ENCODE measurements at regions of chr5 and their contacts with region 1.

Region 1: DNA sequence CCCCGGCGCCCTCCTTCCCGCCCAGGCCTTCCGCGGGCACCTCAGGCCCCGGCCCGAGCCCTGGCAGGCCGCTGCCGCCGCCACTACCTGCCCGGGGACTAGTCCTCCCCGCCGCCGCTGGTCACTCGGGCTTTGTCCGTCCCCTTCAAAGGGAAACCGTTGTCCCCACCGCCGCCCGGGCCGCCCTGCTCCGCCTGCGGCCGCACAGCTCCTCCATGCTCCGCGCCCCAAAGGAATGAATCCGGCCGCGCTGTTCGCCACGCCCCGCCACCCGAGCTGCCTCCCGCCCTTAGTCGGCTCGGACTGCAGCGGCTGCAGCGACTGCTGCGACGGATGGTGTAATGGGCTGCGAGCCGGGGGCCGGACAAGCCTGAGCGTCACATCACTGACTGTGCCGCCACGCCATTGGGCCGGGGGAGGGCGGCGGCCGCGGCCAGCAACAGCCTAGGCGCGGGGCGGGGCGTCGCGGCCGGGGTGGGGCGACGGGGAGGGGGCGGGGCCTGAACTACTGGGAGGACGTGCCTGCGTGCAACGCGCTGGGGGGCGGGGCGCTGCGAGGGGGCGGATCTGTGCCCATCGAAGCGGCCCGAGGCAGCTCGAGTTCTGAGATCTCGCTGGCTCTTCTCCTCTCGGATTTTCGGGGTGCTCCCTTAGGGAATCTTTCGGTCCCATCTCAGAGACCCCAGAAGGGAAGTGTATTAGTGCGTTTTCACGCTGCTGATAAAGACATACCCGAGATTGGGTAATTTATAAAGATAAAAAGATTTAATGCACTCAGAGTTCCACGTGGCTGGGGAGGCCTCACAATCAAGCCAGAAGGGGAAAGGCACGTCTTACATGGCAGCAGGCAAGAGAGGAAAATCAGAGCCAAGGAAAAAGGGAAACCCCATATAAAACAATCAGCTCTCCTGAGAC is at the start of gene FEM1C:
- DNase-seq: peak; percentile 97
- H3K4me3 ChIP-seq: peak within 1 kb of the TSS; percentile 81 to 94 (median 86)
- H3K27ac ChIP-seq: peak within 1 kb of the TSS; percentile 86
- H3K4me1 ChIP-seq: no peaks in the 10 kb centered on the region
- H3K27me3 ChIP-seq: no peaks in the 10 kb centered on the region
- CTCF ChIP-seq: no peak
- total RNA-seq, gene FEM1C: 15.1 to 15.2 TPM

Region 2: DNA sequence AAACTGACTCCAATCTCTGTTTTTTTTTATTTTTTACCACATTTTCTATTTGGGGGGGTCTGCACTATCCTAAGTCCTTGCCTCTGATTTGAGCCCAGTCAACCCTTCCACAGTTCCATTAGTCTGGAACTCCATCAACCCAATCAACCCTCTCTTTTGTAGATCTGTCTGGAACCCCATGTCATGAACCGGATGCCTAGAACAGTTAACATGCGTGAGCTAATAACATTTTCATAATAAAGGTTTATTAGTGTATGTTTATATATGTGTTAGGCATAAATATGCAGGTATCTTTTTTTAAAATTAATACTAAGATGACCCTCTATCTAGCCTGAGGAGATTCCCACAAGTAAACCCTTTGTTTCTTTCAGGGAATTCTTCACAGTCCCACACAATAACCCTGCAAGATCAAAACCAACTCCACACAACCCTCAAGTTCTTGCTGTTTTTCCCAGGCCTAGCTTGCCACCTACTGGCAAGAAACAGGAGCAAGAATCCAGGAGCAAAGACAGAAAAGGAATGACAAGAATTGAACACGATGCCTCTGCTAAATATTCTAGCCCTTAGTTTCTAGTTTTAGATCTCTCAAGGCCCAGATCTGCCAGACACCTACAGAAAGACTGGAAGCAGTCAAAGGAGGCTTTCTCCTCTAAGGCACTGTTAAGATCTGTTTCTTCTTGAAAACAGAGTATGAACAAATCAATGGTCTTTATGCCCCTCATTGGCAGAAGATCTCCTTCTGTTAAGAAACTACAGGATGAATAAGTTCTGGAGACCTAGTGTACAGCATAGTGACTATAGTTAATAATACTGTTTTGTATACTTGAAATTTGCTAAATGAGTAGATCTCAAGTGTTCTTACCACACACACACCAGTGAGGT is 475.4 kb before region 1 on chr5:
- CTCF ChIA-PET with region 1: no interaction called
- dilution Hi-C with region 1: no loop called
- in situ Hi-C with region 1: no loop called
- intact Hi-C with region 1: no loop called
- DNase-seq: peak; percentile 45
- H3K4me3 ChIP-seq: no peak overlapping the region
- H3K27ac ChIP-seq: no peak overlapping the region
- H3K4me1 ChIP-seq: no peaks in the 10 kb centered on the region
- H3K27me3 ChIP-seq: no peaks in the 10 kb centered on the region
- CTCF ChIP-seq: peak; percentile 73 to 86

Region 3: DNA sequence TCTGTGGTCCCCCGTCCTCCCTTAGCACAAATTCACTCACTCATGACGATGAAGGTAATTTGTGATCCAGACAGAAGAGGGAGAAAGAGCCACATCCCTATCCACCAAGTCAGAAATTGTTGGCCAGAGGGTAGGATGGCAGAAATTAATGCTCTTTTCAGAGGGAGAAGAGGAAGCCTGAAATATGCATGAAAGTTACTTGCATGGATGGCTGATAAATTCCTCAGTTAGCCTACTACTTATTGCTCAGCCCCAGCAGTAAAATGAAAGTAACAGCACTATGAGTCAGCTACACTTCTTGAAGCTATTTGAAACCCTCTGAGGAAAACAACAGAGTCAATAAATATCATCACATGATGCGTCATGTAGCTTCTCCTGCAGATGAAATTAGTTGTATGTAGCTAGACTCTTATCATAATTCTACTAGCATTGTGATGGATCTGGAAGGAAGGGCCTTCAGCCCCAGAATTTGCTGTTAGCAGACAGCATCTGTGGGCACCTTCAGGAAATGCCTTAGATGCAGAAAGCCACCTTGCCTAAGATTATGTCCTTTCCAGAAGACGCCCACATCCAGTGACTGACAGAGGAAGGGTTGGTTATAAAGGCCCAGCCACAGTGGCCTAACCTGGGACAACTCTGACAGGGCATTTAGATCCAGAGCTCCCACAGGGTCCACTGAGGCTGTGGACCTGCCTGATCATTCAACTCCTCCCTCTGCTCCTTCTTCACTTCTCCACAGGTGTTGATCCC is 167.1 kb before region 1 on chr5:
- CTCF ChIA-PET with region 1: no interaction called
- dilution Hi-C with region 1: no loop called
- in situ Hi-C with region 1: no loop called
- intact Hi-C with region 1: loop called (anchors 1 kb)
- DNase-seq: peak; percentile 66
- H3K4me3 ChIP-seq: no peak overlapping the region
- H3K27ac ChIP-seq: no peak overlapping the region
- H3K4me1 ChIP-seq: peaks cover 21% of the 10 kb centered on the region
- H3K27me3 ChIP-seq: no peaks in the 10 kb centered on the region
- CTCF ChIP-seq: peak in 1 of 2 donors; percentile 29

Region 4: GRCh38 chr5:115415143-115415491 is 129.6 kb before region 1 on chr5:
- CTCF ChIA-PET with region 1: no interaction called
- dilution Hi-C with region 1: no loop called
- in situ Hi-C with region 1: no loop called
- intact Hi-C with region 1: loop called (anchors 5 kb)
- DNase-seq: peak; percentile 90
- H3K4me3 ChIP-seq: no peak overlapping the region
- H3K27ac ChIP-seq: peak overlapping the region; percentile 21
- H3K4me1 ChIP-seq: peaks cover 28% of the 10 kb centered on the region
- H3K27me3 ChIP-seq: no peaks in the 10 kb centered on the region
- CTCF ChIP-seq: no peak

Region 5: GRCh38 chr5:115460472-115460871 is 84.2 kb before region 1 on chr5:
- CTCF ChIA-PET with region 1: no interaction called
- dilution Hi-C with region 1: no loop called
- in situ Hi-C with region 1: no loop called
- intact Hi-C with region 1: loop called (anchors 2 kb)
- DNase-seq: peak; percentile 90
- H3K4me3 ChIP-seq: no peak overlapping the region
- H3K27ac ChIP-seq: peak overlapping the region; percentile 92
- H3K4me1 ChIP-seq: peaks cover 40% of the 10 kb centered on the region
- H3K27me3 ChIP-seq: no peaks in the 10 kb centered on the region
- CTCF ChIP-seq: no peak

Region 6: GRCh38 chr5:115579747-115580173 is 35.1 kb after region 1 on chr5:
- CTCF ChIA-PET with region 1: no interaction called
- dilution Hi-C with region 1: no loop called
- in situ Hi-C with region 1: no loop called
- intact Hi-C with region 1: loop called (anchors 1 kb)
- DNase-seq: no peak
- H3K4me3 ChIP-seq: no peak overlapping the region
- H3K27ac ChIP-seq: no peak overlapping the region
- H3K4me1 ChIP-seq: peaks cover 25% of the 10 kb centered on the region
- H3K27me3 ChIP-seq: no peaks in the 10 kb centered on the region
- CTCF ChIP-seq: no peak

Region 7: DNA sequence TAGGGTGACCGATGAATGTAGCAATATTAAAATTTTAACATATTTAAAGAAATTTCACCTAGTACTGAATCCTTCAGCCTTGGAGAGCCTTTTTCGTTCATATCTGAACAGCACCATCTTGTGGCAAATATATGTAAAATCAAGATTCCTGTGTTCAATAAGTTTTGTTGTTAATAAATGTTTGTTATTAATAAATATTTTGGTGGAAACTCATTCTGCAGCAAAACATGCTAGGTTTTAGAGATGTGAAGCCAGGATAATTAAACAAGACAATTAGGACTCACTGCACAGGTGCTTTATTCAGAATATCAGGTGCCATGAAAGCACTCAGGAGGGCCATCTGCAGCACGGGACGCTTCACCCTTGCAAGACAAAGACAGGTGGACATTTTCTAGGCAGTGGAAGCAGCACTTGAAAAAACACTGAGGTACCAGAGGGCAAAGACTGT is 41.9 kb after region 1 on chr5:
- CTCF ChIA-PET with region 1: no interaction called
- dilution Hi-C with region 1: no loop called
- in situ Hi-C with region 1: no loop called
- intact Hi-C with region 1: loop called (anchors 2 kb)
- DNase-seq: no peak
- H3K4me3 ChIP-seq: no peak overlapping the region
- H3K27ac ChIP-seq: no peak overlapping the region
- H3K4me1 ChIP-seq: peaks cover 10% of the 10 kb centered on the region
- H3K27me3 ChIP-seq: no peaks in the 10 kb centered on the region
- CTCF ChIP-seq: peak; percentile 44 to 52

Region 8: DNA sequence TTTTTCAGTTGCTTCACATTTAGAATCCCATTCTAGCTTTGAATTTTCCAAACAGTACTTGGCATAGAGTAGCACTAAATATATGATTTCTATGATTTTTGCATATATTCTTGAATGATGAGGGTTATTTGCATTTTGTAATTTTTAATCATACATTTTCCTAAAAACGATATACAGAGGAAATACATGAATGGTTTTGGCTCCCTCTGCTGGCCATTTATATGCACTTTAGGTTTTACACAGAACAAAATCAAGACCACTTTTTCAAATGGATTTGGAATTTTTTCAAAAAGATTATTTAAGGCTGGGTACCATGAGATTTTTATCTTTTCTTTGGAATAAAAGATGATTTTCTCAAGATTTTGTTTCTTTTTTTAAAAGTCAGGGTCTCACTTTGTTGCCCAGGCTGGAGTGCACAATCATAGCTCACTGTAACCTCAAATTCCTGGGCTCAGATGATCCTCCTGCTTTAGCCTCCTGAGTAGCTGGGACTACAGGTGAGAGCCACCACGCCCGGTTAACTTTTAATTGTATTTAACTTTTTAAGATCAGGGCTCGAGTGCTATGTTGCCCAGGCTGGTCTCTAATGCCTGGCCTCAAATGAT is 523.4 kb after region 1 on chr5:
- CTCF ChIA-PET with region 1: no interaction called
- dilution Hi-C with region 1: no loop called
- in situ Hi-C with region 1: no loop called
- intact Hi-C with region 1: loop called (anchors 1 kb)
- DNase-seq: peak; percentile 14
- H3K4me3 ChIP-seq: no peak overlapping the region
- H3K27ac ChIP-seq: no peak overlapping the region
- H3K4me1 ChIP-seq: no peaks in the 10 kb centered on the region
- H3K27me3 ChIP-seq: peaks cover 3% of the 10 kb centered on the region
- CTCF ChIP-seq: peak; percentile 71 to 77

Measured in mammary epithelial cell (primary cell).